Sigmoid colon (tissue), 7 donors: ENCODE measurements at regions of chr11 and their contacts with region 1.

Region 1: GRCh38 chr11:11931461-11932055 is 76.9 kb downstream of the DKK3 start:
- DNase-seq: no peak
- H3K4me3 ChIP-seq: no peak overlapping the region
- H3K27ac ChIP-seq: peak overlapping the region in 1 of 4 donors; percentile 59
- H3K4me1 ChIP-seq: no peaks in the 10 kb centered on the region
- H3K27me3 ChIP-seq: no peaks in the 10 kb centered on the region
- CTCF ChIP-seq: peak in 3 of 4 experiments; percentile 43 to 62 (median 51)
- EP300 ChIP-seq: no peak
- POLR2A ChIP-seq: no peak

Region 2: DNA sequence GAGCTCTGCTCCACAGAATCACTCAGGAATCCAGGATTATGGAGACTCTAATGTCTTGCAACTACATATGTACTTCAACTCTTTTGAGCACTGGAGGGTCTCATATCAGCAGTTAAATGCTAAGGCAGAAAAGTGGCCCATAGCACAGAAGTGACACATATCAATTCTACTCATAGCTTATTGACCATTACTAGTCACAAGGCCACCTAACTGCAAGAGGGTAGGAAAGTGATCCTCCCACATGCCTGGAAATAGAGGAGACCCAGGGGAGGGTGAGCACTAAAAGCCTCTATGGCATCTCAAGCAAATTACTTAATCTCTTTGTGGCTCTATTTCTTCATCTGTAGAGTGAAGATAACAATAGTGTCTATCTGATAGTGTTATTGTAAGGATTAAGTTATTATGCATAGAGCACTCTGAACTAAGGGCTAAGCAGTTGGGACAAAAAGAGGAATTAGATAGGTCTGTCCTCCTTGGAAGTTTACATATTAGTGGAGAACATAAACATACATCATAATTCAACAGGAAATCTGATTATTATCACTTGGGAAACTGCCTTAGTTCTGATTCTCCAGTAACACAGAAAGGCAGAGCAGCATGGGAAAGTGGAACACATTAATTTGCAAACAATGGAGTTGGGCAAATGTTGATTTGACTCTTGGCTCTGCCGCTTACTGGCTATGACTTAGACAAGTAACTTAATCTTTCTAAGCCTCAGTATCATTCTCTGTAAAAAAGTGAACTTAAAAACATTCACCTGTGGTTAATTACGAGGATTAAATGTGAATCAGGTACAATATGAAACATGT is 114.8 kb before region 1 on chr11:
- intact Hi-C with region 1: no loop called
- DNase-seq: no peak
- H3K4me3 ChIP-seq: no peak overlapping the region
- H3K27ac ChIP-seq: no peak overlapping the region
- H3K4me1 ChIP-seq: peaks cover 0 to 25% (median 18%) of the 10 kb centered on the region in 4 donors
- H3K27me3 ChIP-seq: no peaks in the 10 kb centered on the region
- CTCF ChIP-seq: no peak
- EP300 ChIP-seq: no peak
- POLR2A ChIP-seq: no peak

Region 3: DNA sequence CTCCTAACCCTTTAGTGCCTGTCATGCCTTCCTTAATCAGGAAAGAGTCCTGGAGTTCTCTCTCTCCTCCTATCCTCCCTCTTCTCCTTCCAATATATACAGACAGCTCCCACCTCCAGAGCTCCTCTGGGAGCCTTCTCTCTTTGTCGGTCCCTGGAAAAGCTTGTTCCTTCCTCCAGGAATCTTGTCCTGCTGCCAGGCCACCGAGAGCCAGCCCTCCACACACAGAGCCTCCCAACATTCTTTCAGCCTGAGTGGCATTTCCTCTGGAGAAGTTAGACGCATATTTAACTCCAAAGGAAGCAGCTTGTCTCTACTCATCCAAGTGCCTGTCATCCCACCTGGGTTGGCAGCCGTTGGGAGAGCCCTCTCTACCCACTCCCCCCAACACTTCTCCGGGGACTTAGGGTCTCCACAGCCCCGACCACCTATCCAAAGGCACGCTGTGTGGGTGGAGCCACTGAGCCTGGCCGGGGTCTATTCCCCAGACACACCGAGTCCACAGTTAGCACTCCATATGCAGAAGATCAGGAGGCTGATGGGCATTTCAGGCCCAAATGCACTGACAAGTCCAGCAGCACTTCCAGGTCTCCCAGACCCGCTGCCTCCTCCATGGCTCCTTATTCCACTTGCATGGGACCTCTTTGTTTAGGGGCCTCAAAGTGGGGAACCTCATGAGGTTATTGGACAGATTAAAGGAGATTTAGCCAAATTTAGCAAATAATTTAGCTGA is 45.8 kb after region 1 on chr11:
- intact Hi-C with region 1: loop called (anchors 5 kb)
- DNase-seq: peak; percentile 93
- H3K4me3 ChIP-seq: no peak overlapping the region
- H3K27ac ChIP-seq: peak overlapping the region; percentile 62 to 87 (median 82)
- H3K4me1 ChIP-seq: peaks cover 0 to 77% (median 75%) of the 10 kb centered on the region in 4 donors
- H3K27me3 ChIP-seq: no peaks in the 10 kb centered on the region
- CTCF ChIP-seq: no peak
- EP300 ChIP-seq: no peak
- POLR2A ChIP-seq: no peak

Region 4: GRCh38 chr11:12281571-12282478 is 350.3 kb after region 1 on chr11:
- intact Hi-C with region 1: loop called (anchors 5 kb)
- DNase-seq: peak; percentile 92
- H3K4me3 ChIP-seq: no peak overlapping the region
- H3K27ac ChIP-seq: peak overlapping the region in 1 of 4 donors; percentile 13
- H3K4me1 ChIP-seq: peaks cover 0 to 39% (median 29%) of the 10 kb centered on the region in 4 donors
- H3K27me3 ChIP-seq: no peaks in the 10 kb centered on the region
- CTCF ChIP-seq: peak; percentile 95 to 99 (median 99)
- EP300 ChIP-seq: no peak
- POLR2A ChIP-seq: no peak